Posterior vena cava (tissue), 2 donors: ENCODE measurements at regions of chr11 and their contacts with region 1.

Region 1: GRCh38 chr11:80831374-80831773 is 1390.5 kb upstream of the TENM4 start:
- DNase-seq: no peak

Region 2: GRCh38 chr11:80598905-80599304 is 232.5 kb before region 1 on chr11:
- intact Hi-C with region 1: no loop called
- DNase-seq: no peak

Region 3: GRCh38 chr11:80798174-80798573 is 33.2 kb before region 1 on chr11:
- intact Hi-C with region 1: no loop called
- DNase-seq: no peak

Region 4: GRCh38 chr11:81888391-81888790 is 1057.0 kb after region 1 on chr11:
- intact Hi-C with region 1: loop called in 1 of 2 experiments (anchors 5 kb)
- DNase-seq: no peak